Psoas muscle (tissue), 8 donors: ENCODE measurements at regions of chr6 and their contacts with region 1.

Region 1: DNA sequence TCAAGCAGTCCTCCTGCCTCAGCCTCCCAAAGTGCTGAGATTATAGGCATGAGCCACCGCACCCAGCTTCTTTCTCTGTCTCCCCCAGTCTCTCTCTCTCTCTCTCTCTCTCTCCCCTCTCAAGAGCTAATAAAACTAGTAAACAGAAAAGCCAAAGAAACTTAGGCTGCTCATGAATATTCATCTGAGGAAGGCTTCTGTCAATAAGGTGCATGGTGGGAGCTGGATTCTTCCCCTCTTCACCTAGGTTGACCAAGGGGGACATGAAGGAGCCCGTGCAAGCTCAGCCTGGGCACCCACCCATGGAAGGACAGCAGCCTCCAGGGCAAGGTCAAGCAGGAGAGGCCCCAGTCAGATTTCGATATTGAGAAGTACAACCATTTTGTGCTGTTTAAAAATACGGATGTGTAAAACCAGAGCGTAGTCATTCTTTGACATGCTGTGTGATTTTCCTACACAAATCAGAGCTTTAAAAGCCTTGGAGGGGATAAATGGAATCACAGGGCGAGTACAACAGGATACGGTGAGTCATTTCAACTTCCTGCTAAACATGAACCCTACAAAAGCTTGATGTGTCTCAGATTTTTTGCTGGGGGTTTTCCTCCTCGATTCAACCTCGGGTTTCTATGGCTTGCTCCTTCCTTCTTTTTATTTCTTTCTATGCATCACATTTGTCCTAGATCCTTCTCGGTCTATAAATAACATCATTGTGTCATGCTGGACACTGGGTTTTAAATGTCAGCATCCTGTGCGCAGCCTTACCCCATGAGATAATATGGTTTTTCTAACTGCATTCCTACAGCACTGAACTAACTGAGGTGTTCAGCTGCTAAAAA is 368.9 kb upstream of the JARID2 start:
- DNase-seq: no peak
- ATAC-seq: peak; percentile 91 to 94 (median 92)
- H3K4me3 ChIP-seq: peak overlapping the region; percentile 22
- H3K27ac ChIP-seq: peak overlapping the region; percentile 86
- H3K4me1 ChIP-seq: peaks cover 40% of the 10 kb centered on the region
- H3K27me3 ChIP-seq: no peaks in the 10 kb centered on the region
- CTCF ChIP-seq: no peak

Region 2: GRCh38 chr6:14542670-14543366 is 334.2 kb before region 1 on chr6:
- intact Hi-C with region 1: loop called in 1 of 2 experiments (anchors 10 kb)
- DNase-seq: no peak
- ATAC-seq: no peak
- H3K4me3 ChIP-seq: no peak overlapping the region
- H3K27ac ChIP-seq: no peak overlapping the region
- H3K4me1 ChIP-seq: peaks cover 26% of the 10 kb centered on the region
- H3K27me3 ChIP-seq: no peaks in the 10 kb centered on the region
- CTCF ChIP-seq: no peak

Region 3: GRCh38 chr6:14665827-14666724 is 210.9 kb before region 1 on chr6:
- intact Hi-C with region 1: no loop called
- DNase-seq: peak in 1 of 2 donors; percentile 21
- ATAC-seq: peak in 1 of 4 donors; percentile 27
- H3K4me3 ChIP-seq: no peak overlapping the region
- H3K27ac ChIP-seq: no peak overlapping the region
- H3K4me1 ChIP-seq: no peaks in the 10 kb centered on the region
- H3K27me3 ChIP-seq: peaks cover 0 to 2% (median 0%) of the 10 kb centered on the region in 3 donors
- CTCF ChIP-seq: no peak

Region 4: DNA sequence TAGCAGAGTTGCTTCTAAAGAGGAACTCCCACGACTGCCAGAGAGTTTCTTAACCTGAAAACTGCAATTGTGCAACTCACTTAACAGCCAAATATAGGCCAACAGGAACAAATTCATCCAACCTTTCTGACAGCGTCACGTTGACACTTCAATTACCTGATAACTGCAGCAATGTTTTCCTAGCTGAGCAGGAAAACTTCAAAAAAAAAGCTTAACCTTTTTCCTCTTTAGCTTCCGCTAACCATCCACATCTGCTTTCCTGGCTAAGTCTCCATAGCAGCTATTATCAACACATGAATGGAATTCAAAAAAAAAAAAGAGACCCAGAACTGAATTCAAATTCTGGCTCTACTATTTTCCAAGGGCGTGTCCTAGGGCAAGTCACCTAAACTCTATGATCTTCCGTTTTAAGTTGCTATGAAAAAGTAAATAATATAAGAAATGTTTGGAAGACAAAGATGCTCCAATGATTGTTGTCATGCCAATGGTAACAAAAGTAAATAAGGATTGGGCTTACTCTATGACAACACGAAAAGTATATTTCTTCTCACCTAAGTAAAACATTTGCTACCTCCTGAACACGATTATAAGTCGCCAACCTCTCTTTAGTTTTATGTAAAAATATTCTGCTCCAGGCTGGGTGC is 155.8 kb before region 1 on chr6:
- intact Hi-C with region 1: no loop called
- DNase-seq: no peak
- ATAC-seq: peak in 1 of 4 donors; percentile 61
- H3K4me3 ChIP-seq: no peak overlapping the region
- H3K27ac ChIP-seq: no peak overlapping the region
- H3K4me1 ChIP-seq: no peaks in the 10 kb centered on the region
- H3K27me3 ChIP-seq: no peaks in the 10 kb centered on the region
- CTCF ChIP-seq: no peak

Region 5: GRCh38 chr6:14910692-14911547 is 33.9 kb after region 1 on chr6:
- intact Hi-C with region 1: no loop called
- DNase-seq: peak in 1 of 2 donors; percentile 39
- ATAC-seq: peak in 3 of 4 donors; percentile 45 to 65 (median 54)
- H3K4me3 ChIP-seq: no peak overlapping the region
- H3K27ac ChIP-seq: no peak overlapping the region
- H3K4me1 ChIP-seq: no peaks in the 10 kb centered on the region
- H3K27me3 ChIP-seq: no peaks in the 10 kb centered on the region
- CTCF ChIP-seq: no peak

Region 6: DNA sequence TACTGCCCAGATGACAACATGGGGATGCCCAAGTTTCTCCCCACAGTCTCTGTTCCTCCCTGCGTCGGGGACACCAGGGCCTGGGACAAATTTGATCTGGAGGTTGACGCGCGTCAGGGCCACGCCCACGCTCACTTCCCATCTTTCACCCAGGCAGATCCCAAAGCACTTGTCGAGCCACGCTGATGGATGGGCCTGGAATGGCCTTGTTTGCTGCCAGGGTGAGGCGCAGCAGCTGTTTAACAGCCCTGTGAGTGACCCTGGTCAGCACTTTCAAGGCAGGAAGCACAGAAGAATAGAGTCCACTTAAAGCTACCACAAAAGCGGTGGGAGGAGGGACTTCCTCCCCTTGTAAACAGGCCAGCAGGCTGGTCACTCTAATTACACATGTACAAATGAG is 44.2 kb after region 1 on chr6:
- intact Hi-C with region 1: loop called in 1 of 2 experiments (anchors 5 kb)
- DNase-seq: peak; percentile 83 to 85
- ATAC-seq: peak; percentile 30 to 90 (median 48)
- H3K4me3 ChIP-seq: no peak overlapping the region
- H3K27ac ChIP-seq: peak overlapping the region; percentile 26
- H3K4me1 ChIP-seq: peaks cover 55% of the 10 kb centered on the region
- H3K27me3 ChIP-seq: no peaks in the 10 kb centered on the region
- CTCF ChIP-seq: no peak

Region 7: DNA sequence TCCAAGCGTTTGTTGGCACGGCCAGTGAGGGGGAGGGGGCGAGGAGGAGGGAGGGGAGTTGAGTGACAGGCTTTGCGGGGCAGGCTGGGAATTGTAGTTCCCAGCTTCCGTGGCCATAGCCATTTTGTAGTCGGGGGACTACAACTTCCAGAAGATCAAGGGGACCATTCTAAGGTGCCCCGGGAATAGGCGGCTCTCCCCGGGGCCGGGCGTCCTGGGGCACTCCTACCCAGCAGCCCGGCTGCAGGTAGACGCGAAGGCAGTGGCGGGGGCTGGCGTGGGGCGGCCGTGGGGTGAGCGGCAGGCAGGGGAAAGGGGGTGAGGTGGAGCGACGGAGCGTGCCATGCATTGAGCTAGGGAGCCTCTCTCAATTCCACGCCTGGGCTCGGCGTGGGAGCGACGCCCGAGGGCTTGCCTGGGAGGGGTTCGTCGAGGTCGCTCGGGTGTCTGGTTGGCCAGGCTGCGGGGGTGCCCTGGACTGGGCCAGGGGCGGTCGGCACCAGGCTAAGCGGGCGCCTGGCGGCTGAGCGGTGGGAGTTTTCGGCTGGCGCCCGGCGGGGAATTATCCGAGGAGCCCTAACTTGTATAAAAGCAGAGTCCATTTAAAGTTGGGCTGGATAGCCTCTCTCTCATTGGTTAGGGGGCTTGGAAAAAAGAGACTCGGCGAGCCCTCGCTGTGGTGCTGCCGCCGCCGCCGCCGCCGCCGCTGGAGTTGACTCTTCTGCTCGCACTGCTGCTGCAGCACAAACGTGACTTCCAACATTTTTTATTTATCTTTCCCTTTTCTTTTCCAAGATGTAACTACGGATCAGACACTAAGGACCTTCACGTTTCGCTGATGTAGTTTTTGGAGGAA is 368.6 kb after region 1 on chr6 and contains the start of gene JARID2:
- intact Hi-C with region 1: loop called (anchors 2 to 10 kb)
- DNase-seq: peak; percentile 100
- ATAC-seq: peak; percentile 84 to 89 (median 87)
- H3K4me3 ChIP-seq: peak within 1 kb of the TSS; percentile 88
- H3K27ac ChIP-seq: peak within 1 kb of the TSS; percentile 98
- H3K4me1 ChIP-seq: peaks cover 4% of the 10 kb centered on the region
- H3K27me3 ChIP-seq: no peaks in the 10 kb centered on the region
- CTCF ChIP-seq: no peak
- total RNA-seq, gene JARID2: 2.8 to 16.1 (median 7.2) TPM